ENCODE measurements at regions of chr11 and their contacts with region 1.

Region 1: DNA sequence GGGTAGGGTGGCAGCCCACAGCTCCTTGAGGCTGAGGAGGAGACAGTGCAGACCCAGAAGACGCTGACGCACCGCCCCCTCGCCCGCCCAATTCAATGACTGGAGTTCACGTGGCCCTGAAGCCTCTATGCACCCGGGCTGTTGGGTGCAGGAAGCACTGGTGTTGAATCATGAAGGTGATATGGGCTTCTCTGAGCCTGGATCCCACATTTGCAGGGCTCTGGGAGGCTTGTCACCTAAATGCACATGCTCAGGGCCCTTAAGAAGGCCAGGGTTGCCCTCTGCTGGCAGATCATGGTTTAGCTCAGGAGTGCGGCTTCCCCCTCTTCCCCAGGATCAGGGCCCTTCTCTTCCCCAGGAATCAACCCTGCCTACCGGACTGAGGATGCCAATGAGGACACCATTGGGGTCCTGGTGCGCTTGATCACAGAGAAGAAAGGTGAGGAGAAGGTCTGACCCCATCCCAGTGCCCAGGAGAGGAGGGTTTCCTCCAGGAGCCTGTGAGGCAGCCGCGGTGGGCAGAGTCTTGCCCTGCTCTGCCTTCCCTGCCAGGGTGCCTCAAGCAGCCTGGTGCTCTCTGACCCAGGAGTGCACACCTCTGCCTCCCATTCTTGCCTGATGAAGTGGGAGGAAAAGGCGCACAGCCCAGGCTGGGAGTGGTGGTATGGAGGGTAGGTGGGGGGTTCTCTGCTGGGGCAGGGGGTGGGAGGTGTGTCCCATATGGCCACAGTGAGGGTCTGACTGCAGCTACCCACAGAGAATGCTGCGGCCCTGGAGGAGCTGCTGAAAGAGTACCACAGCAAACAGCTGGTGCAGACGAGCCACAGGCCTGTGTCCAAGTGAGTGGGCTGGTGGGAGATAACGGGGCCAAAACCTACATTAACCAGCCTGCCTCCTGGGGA is 17.5 kb downstream of the RELT start:
- DNase-seq: peak; percentile 75
- H3K4me3 Mint-ChIP-seq: no peak overlapping the region
- H3K27ac Mint-ChIP-seq: no peak overlapping the region
- H3K4me1 Mint-ChIP-seq: no peaks in the 10 kb centered on the region
- H3K27me3 Mint-ChIP-seq: no peaks in the 10 kb centered on the region

Region 2: GRCh38 chr11:73360336-73361013 is 33.3 kb before region 1 on chr11:
- CTCF ChIA-PET with region 1: interaction called, 10 read pairs
- POLR2A ChIA-PET with region 1: no interaction called
- intact Hi-C with region 1: no loop called
- DNase-seq: peak; percentile 48
- H3K4me3 Mint-ChIP-seq: no peak overlapping the region
- H3K27ac Mint-ChIP-seq: no peak overlapping the region
- H3K4me1 Mint-ChIP-seq: no peaks in the 10 kb centered on the region
- H3K27me3 Mint-ChIP-seq: no peaks in the 10 kb centered on the region